Right ventricle myocardium inferior (tissue), 1 donor: ENCODE measurements at regions of chr2 and their contacts with region 1.

Region 1: DNA sequence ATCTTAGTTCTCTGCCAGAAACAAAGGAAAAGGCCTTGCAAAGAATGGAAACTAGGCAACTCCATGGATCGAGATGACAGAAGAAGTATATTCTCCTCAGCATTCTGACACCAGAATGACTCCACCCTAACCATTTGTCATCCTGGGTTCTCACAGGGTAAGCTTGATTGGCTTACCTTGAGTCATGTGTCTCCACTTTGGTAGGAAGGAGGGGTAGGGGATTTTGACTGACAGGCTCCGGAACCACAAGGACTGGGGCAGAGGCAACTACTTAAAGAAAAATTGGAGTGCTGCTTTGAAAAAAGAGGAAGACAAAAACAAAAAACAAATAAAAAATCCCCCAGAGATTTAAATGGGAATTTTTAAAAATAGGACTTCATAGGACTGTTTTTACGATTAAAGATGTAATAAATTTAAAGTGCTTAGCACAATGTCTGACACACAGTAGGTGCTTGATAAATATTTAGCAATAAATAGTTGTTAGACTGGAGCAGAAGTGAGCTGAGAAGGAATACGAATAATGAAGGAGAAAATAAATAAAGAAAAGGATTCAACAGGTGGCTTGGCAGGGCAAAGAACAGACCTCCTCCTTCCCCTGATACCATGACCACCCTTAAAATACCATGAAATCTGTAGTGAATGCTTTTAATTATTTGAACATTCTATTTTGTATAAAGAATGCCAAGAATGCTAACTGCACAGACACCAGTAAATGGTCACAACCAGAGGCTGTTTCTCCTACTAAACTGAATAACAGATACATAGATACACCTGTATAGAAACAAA is 230.2 kb downstream of the CDCA7 start:
- DNase-seq: no peak
- ATAC-seq: no peak

Region 2: GRCh38 chr2:174051741-174052583 is 467.1 kb after region 1 on chr2:
- intact Hi-C with region 1: loop called (anchors 5 kb)
- DNase-seq: no peak
- ATAC-seq: peak; percentile 69